ENCODE measurements at regions of chr20 and their contacts with region 1.

Region 1: DNA sequence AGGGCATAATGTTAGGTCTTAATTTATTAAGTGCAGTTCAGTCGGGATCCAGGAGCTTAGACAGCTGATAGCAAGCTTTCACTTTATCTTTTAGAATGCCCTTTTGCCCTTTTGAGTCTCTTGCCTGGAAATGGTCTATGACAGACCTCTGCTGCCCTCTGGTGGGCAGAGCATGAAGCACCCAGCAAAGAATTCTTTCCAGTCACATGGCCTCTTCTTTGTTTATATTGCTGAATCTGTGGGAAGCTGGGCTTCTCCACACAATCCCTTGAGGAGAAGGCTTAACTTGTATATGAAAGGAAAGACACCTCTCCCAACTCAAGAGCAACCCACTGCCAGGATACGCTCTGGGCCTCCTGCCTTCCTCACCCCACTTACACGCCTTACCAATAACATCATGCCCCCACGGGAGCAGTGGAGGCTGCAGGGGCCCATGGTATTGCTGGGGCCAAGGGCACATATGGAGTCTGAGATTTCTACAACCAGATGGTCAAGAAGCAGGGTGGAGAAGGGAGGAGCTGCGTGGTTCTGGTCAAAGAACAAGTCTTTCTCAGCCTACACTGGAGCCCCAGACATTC is 20.4 kb downstream of the WFDC3 start:
- DNase-seq: peak; percentile 83 to 85
- H3K4me3 ChIP-seq: no peak overlapping the region
- H3K27ac ChIP-seq: peak overlapping the region in 1 of 3 donors; percentile 4
- H3K4me1 ChIP-seq: peaks cover 0 to 4% of the 10 kb centered on the region in 2 donors
- H3K27me3 ChIP-seq: no peaks in the 10 kb centered on the region
- CTCF ChIP-seq: peak; percentile 72 to 98 (median 94)
- POLR2A ChIP-seq: no peak

Region 2: GRCh38 chr20:45311589-45312211 is 459.6 kb before region 1 on chr20:
- intact Hi-C with region 1: loop called (anchors 10 kb)
- DNase-seq: peak; percentile 50 to 59
- H3K4me3 ChIP-seq: no peak overlapping the region
- H3K27ac ChIP-seq: no peak overlapping the region
- H3K4me1 ChIP-seq: peaks cover 3 to 8% of the 10 kb centered on the region in 2 donors
- H3K27me3 ChIP-seq: no peaks in the 10 kb centered on the region
- CTCF ChIP-seq: peak; percentile 41 to 74 (median 60)
- POLR2A ChIP-seq: no peak

Region 3: DNA sequence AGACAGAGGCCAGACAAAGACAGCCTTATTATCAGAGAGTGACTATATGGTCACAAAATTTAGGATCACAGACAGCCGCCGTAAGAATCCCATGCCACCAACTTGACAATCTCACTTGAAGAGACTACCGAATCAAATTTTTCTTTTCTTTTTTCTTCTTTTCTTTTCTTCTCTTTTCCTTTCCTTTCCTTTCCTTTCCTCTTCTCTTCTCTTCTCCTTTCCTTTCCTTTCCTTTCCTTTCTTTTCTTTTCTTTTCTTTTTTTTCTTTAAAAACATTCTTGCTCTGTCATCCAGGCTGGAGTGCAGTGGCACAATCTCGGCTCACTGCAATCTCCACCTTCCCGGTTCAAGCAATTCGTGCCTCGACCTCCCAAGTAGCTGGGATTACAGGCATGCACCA is 222.9 kb before region 1 on chr20:
- intact Hi-C with region 1: loop called (anchors 2 kb)
- DNase-seq: no peak
- H3K4me3 ChIP-seq: no peak overlapping the region
- H3K27ac ChIP-seq: no peak overlapping the region
- H3K4me1 ChIP-seq: no peaks in the 10 kb centered on the region
- H3K27me3 ChIP-seq: no peaks in the 10 kb centered on the region
- CTCF ChIP-seq: no peak
- POLR2A ChIP-seq: no peak

Measured in thyroid gland (tissue), 4 donors.